ENCODE measurements at regions of chr22 and their contacts with region 1.

Region 1: DNA sequence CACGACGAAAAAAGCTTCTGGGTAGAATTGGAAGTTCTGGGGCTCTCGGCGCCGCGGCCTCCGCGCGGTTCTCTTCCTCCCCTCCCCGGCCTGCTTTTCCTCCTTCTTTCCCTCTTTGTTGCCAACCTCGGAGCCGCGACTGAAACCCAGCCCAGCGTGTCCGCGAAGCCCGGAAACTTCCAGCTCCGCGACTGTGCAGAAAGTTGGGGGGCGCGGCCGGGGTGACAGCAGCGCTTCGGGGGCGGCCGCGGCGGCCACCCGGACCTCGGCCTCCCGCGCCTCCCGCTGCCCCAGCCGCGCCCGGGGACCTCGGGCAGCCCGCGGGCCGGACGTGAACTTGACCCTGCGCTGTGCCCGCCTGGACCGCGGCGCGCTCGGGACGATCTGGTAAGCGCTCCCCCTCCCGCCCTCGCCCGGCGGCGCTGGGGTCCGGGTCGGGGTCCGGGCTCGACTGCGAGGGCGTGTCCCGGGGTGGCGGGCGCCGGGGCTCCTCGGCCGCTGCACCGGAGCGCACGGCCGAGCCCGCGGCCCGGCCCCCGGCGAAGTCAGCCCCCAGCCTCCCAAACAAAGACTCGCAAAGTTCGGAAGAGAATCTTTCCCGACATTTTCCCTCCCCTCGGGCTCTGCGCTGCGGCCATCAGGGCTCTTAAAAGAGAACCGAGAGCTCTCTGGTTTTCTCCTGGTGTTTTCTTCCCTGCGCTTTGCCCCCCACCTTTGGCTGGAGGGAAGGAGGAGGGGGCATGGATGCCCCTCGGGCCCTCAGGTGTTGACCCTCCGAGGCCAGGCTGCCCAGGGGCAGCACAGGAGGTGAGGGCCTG is 67.9 kb upstream of the WNT7B start:
- DNase-seq: no peak
- H3K4me3 Mint-ChIP-seq: peak overlapping the region; percentile 79
- H3K27ac Mint-ChIP-seq: peak overlapping the region; percentile 97
- H3K4me1 Mint-ChIP-seq: peaks cover 14% of the 10 kb centered on the region
- H3K27me3 Mint-ChIP-seq: no peaks in the 10 kb centered on the region
- CTCF ChIP-seq: no peak

Region 2: GRCh38 chr22:45615364-45615763 is 429.5 kb before region 1 on chr22:
- CTCF ChIA-PET with region 1: no interaction called
- POLR2A ChIA-PET with region 1: no interaction called
- intact Hi-C with region 1: no loop called
- DNase-seq: no peak
- H3K4me3 Mint-ChIP-seq: no peak overlapping the region
- H3K27ac Mint-ChIP-seq: no peak overlapping the region
- H3K4me1 Mint-ChIP-seq: peaks cover 12% of the 10 kb centered on the region
- H3K27me3 Mint-ChIP-seq: no peaks in the 10 kb centered on the region
- CTCF ChIP-seq: no peak

Region 3: DNA sequence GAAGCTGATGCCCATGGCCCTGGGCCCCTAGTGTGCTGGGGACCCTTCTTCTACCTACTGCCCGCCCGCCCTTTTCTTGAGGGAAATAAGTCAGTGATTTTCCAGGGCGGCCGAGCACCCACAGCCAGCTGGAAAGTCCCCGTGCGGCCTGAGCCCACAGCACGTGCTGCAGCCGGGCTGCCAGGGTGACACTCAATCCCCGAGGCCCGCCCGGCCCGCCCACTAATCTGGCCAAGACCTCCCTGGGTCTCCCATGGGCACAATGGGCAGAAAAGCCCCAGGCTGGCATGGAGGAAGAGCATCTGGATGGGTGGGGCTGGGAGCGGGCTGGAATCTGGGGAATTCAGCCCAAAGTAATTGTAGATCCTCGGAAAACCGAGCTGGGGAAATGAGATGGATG is 92.7 kb before region 1 on chr22:
- CTCF ChIA-PET with region 1: no interaction called
- POLR2A ChIA-PET with region 1: no interaction called
- intact Hi-C with region 1: no loop called
- DNase-seq: no peak
- H3K4me3 Mint-ChIP-seq: no peak overlapping the region
- H3K27ac Mint-ChIP-seq: no peak overlapping the region
- H3K4me1 Mint-ChIP-seq: no peaks in the 10 kb centered on the region
- H3K27me3 Mint-ChIP-seq: no peaks in the 10 kb centered on the region
- CTCF ChIP-seq: no peak

Region 4: GRCh38 chr22:46057762-46058420 is 13.1 kb after region 1 on chr22:
- CTCF ChIA-PET with region 1: no interaction called
- POLR2A ChIA-PET with region 1: interaction called, 160 read pairs
- intact Hi-C with region 1: no loop called
- DNase-seq: peak; percentile 87
- H3K4me3 Mint-ChIP-seq: peak overlapping the region; percentile 81
- H3K27ac Mint-ChIP-seq: peak overlapping the region; percentile 98
- H3K4me1 Mint-ChIP-seq: peaks cover 33% of the 10 kb centered on the region
- H3K27me3 Mint-ChIP-seq: no peaks in the 10 kb centered on the region
- CTCF ChIP-seq: no peak

Region 5: GRCh38 chr22:46150034-46150654 is 105.3 kb after region 1 on chr22 and contains the start of gene PPARA:
- CTCF ChIA-PET with region 1: no interaction called
- POLR2A ChIA-PET with region 1: no interaction called
- intact Hi-C with region 1: no loop called
- DNase-seq: peak; percentile 71
- H3K4me3 Mint-ChIP-seq: peak within 1 kb of the TSS; percentile 70
- H3K27ac Mint-ChIP-seq: no peak within 1 kb of the TSS
- H3K4me1 Mint-ChIP-seq: peaks cover 6% of the 10 kb centered on the region
- H3K27me3 Mint-ChIP-seq: peaks cover 14% of the 10 kb centered on the region
- CTCF ChIP-seq: no peak
- total RNA-seq, gene PPARA: 8.0 and 10.1 TPM in 2 replicates